ENCODE measurements at regions of chr2 and their contacts with region 1.

Region 1: DNA sequence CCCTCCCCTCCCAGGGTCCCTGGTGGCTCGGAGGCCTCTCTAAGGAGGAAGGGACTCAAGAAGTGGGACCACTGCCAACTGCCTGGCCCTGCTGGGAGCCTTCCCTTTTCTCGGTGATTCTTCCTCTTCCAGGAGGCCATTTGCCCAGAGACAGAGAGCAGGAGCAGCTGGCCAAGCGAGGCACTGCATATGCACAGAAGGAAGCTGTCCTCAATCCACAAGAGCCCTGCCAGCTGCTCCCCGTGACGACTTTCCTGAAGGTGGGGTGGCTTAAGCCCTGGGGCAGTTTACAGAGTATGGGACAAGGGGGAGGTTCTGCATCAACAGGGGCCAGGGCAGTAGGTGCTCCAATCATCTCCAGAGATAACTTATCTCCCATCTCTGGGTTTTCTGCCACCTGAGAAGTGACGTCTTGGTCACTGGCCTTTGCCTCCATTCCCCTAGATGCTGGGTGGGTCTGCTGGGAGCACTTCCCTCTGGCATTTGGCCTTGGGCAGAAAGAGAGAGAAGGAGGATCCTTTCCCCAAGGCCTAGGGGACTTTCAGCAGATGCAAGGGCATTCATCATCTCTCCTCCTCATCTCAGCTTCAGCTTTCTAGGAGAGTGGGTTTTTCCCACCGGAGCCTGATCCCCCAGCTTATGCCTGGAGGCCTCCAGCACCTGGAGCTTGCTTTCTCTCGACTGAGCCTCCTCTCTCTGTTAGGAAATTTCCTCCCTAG is 28.5 kb downstream of the CIB4 start:
- DNase-seq: no peak
- H3K4me3 ChIP-seq: no peak overlapping the region
- H3K27ac ChIP-seq: no peak overlapping the region
- H3K4me1 ChIP-seq: no peaks in the 10 kb centered on the region
- H3K27me3 ChIP-seq: no peaks in the 10 kb centered on the region
- CTCF ChIP-seq: no peak
- POLR2A ChIP-seq: no peak

Region 2: GRCh38 chr2:26530696-26531095 is 82.0 kb before region 1 on chr2:
- intact Hi-C with region 1: no loop called
- DNase-seq: no peak
- H3K4me3 ChIP-seq: no peak overlapping the region
- H3K27ac ChIP-seq: no peak overlapping the region
- H3K4me1 ChIP-seq: no peaks in the 10 kb centered on the region
- H3K27me3 ChIP-seq: no peaks in the 10 kb centered on the region
- CTCF ChIP-seq: no peak
- POLR2A ChIP-seq: no peak

Region 3: DNA sequence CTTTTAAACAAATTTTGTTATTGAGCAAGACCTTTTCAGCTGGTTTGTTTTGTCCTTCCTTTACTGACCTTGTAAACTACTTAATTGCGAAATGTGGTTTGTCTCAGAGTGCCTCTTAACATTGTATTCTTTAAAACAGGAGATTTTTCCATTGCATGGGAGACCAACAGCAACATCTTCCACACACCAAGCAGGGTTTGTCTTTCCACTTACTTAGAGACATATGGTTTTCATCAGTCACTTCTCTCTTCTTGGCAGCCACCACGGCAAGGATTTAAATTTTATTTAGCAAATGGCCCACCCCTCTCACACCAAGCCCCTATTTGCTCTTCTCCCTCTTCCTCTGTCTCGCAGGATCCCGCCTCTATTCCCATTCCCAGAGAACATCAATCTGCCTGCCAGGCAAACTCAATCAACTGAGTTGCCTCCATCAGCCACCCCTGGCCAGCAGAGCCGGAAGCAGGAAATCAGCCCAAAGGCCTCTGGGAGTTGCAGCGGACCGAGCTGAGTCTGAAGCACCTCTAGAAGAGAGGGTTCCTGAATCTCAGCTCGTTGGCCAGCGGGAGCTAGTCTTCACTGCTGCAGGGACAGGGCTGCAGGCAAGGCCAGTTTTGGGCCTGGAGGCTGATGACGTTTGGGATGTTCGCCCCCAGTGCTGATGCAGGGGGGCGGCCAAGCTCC is 39.8 kb after region 1 on chr2:
- intact Hi-C with region 1: loop called (anchors 5 kb)
- DNase-seq: no peak
- H3K4me3 ChIP-seq: no peak overlapping the region
- H3K27ac ChIP-seq: peak overlapping the region in 1 of 2 donors; percentile 39
- H3K4me1 ChIP-seq: no peaks in the 10 kb centered on the region
- H3K27me3 ChIP-seq: no peaks in the 10 kb centered on the region
- CTCF ChIP-seq: no peak
- POLR2A ChIP-seq: no peak